Activated CD4-positive, alpha-beta T cell treated with anti-CD3 and anti-CD28 coated beads for 36 hours (primary cell): ENCODE measurements at regions of chr5 and their contacts with region 1.

Region 1: DNA sequence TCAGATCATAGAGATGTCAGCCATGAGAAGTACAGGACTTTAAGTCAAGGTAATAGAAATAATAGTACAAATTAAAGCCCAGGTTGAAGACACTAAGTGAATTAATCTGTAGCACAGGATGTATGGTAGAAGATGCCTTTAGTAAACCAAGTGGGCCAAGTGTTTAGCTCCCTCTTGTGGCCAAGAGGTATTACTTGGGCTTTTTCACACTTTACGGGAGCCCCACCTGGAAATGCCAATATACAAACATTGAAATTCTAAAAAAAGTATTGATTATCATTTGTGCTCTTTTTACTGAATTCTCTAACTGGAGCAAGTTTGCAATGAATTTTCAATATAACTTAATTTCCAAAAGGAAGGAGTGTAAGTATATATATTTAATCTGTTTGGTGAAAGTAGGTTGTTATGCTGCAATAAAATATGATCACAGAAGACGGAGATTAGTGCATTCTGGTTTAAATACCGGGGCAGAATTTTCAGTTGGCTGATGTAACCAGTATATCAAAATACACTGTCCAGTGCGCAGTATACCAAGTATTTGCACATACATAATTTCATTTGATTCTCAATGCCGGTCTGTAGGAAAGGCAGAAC is 84.7 kb downstream of the PARP8 start:
- DNase-seq: peak; percentile 58
- ATAC-seq: peak; percentile 91
- H3K4me3 Mint-ChIP-seq: no peak overlapping the region
- H3K27ac Mint-ChIP-seq: peak overlapping the region; percentile 58
- H3K4me1 Mint-ChIP-seq: peaks cover 41% of the 10 kb centered on the region
- H3K27me3 Mint-ChIP-seq: no peaks in the 10 kb centered on the region

Region 2: DNA sequence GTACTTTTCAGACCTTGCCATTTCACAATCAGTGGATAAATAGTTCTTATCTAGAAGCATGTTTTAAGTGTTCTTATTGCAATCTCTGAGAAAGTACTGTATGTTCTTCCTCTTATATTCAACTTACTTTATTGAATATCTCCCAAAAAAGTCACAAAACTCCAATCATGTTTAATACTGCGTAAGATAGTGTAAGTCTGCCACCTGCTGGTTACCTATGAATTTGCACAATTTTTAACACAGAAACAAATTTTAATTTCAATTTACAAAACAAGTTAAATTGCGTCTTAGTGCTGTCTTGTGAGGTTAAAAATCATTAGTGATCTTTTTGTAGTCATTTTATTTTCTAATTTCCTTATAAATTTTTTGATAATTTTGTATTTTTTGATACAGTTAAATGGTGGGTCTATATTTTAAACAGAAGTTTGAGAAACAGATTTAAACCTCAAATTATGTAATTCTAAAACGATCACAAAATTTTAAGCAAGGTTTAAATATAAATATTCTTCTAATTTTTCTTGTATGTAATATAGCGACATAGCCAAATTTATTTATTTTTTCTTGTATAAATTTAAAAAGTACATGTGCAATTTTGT is 425.8 kb before region 1 on chr5:
- CTCF ChIA-PET with region 1: no interaction called
- POLR2A ChIA-PET with region 1: no interaction called
- intact Hi-C with region 1: loop called in 1 of 2 experiments (anchors 10 kb)
- DNase-seq: no peak
- ATAC-seq: no peak
- H3K4me3 Mint-ChIP-seq: no peak overlapping the region
- H3K27ac Mint-ChIP-seq: no peak overlapping the region
- H3K4me1 Mint-ChIP-seq: peaks cover 10% of the 10 kb centered on the region
- H3K27me3 Mint-ChIP-seq: no peaks in the 10 kb centered on the region

Region 3: GRCh38 chr5:50501491-50502228 is 249.5 kb before region 1 on chr5:
- CTCF ChIA-PET with region 1: no interaction called
- POLR2A ChIA-PET with region 1: no interaction called
- intact Hi-C with region 1: loop called in 1 of 2 experiments (anchors 5 kb)
- DNase-seq: no peak
- ATAC-seq: peak; percentile 82
- H3K4me3 Mint-ChIP-seq: no peak overlapping the region
- H3K27ac Mint-ChIP-seq: no peak overlapping the region
- H3K4me1 Mint-ChIP-seq: peaks cover 10% of the 10 kb centered on the region
- H3K27me3 Mint-ChIP-seq: no peaks in the 10 kb centered on the region

Region 4: DNA sequence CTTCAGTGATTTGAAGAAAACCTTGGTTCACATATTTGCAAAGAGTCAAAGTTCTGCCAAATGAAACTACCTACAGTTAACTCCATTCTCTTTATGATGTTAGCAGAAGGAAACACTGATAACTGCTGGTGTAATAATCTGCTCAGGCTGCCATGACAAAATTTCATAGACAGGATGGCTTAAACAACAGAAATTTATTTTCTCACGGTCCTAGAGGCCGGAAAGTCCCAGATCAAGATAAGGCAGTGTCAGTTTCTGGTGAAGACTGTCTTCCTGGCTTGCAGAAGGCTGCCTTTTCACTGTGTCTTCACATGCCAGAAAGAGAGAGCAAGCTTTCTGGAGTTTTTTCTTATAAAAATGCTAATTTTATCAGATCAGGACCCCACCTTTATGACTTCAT is 187.1 kb before region 1 on chr5:
- CTCF ChIA-PET with region 1: no interaction called
- POLR2A ChIA-PET with region 1: no interaction called
- intact Hi-C with region 1: no loop called
- DNase-seq: peak; percentile 8
- ATAC-seq: peak; percentile 51
- H3K4me3 Mint-ChIP-seq: no peak overlapping the region
- H3K27ac Mint-ChIP-seq: no peak overlapping the region
- H3K4me1 Mint-ChIP-seq: peaks cover 5% of the 10 kb centered on the region
- H3K27me3 Mint-ChIP-seq: no peaks in the 10 kb centered on the region

Region 5: GRCh38 chr5:50667653-50668595 is 83.2 kb before region 1 on chr5:
- CTCF ChIA-PET with region 1: interaction called, 3 read pairs
- POLR2A ChIA-PET with region 1: no interaction called
- intact Hi-C with region 1: loop called (anchors 1 to 2 kb)
- DNase-seq: peak; percentile 92
- ATAC-seq: peak; percentile 70
- H3K4me3 Mint-ChIP-seq: peak overlapping the region; percentile 85
- H3K27ac Mint-ChIP-seq: peak overlapping the region; percentile 99
- H3K4me1 Mint-ChIP-seq: peaks cover 40% of the 10 kb centered on the region
- H3K27me3 Mint-ChIP-seq: no peaks in the 10 kb centered on the region

Region 6: DNA sequence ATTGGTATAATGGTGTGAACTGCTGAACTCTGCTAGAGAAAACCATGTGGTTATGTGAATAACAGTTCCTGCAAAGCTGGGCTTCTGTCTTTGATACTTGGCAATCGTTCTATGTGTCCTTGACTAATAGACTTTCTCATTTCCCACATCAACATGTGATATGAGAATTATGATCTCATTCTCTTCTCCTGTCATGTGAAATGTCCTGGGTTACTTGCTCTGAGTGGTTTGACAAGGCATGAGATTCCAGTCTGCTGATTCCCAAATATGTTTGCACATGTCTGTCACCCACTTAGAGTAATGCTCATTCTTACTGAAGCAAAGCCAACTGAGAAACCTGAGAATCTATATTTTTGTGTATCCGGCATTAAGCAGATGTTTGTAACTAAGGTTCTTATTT is 56.5 kb after region 1 on chr5:
- CTCF ChIA-PET with region 1: no interaction called
- POLR2A ChIA-PET with region 1: no interaction called
- intact Hi-C with region 1: no loop called
- DNase-seq: no peak
- ATAC-seq: no peak
- H3K4me3 Mint-ChIP-seq: no peak overlapping the region
- H3K27ac Mint-ChIP-seq: no peak overlapping the region
- H3K4me1 Mint-ChIP-seq: no peaks in the 10 kb centered on the region
- H3K27me3 Mint-ChIP-seq: no peaks in the 10 kb centered on the region